Cardiac septum (tissue), 1 donor: ENCODE measurements at regions of chrX and their contacts with region 1.

Region 1: DNA sequence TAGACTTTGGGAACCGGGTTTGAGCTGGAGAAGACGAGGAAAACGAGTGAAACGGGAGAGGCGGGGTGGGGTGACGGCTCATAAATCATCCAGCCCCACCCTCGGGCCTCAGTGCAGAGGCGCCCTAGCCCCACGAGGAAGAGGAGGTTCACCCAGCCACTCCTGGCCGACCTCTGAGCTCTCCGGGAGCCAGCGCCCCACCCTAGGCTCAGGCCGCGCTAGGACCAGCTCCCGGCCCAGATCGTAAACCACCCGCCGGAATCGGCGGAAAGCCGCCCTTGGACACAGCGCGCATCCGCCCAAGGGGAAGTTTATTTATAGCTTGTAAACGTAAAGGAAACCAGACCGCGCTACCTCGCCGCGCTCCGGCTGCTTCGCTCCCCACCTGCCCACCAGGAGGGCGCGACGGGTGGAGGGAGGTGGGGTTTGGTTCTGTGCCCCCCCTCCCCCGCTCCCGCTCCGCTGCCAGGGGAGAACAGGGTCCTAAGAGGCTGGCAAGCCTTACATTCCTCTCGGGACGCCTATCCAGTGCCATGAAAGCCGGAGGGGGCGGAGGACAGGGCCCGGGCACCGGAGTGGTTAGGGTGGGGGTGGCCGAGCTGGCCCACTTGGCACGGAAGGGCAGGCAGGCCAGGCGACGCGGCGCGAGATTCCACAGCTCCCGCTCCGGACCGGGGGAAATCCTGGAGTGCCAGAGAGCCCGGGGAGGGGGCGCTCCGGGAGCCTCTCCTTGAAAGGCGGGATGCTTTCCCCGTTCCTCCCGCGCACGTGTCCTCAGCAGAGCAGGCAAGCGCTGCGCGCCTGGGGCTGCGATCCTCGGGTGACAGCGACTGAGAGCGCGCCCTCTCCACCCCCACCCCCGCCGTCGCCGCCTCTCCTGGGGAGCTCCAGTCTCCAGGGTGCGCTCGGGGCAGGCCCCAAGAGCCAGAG is 84.2 kb downstream of the BCOR start:
- DNase-seq: peak; percentile 86

Region 2: DNA sequence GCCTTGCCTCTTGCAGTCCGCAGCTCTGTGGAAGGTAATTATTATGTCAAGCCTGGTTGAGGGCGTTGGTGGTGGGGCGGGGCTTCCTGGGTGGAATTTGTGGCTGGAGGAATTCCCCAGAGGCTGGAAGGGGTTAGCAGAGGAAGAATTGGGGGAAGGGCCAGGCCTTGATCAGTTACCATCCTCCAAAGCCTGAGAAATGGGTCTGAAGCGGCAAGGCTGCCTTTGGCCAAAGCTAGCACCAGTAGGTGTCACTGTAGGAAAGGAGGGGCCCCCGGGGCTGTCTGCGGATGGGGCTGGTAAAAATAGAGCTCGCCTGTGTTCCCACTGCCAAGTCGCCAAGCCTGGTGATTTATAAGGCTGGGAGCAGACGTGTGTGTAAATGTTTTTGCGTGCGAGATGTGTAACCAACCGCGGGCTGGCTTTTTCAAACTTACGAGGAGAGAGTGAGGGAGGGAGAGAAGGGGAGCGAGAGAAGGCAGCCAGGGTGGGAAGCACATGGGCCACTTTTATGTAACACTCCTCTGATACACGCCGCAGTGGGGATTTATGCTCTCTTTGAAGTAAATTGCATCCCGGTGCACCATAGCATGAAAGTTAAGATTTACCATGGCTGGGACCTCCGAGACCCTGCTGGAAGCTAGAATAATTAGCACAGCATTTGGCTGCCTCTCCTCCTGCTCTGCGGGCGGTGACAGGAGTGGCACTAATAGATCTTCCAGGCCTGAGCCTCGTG is 282.7 kb before region 1 on chrX:
- intact Hi-C with region 1: loop called (anchors 5 kb)
- DNase-seq: peak; percentile 81

Region 3: DNA sequence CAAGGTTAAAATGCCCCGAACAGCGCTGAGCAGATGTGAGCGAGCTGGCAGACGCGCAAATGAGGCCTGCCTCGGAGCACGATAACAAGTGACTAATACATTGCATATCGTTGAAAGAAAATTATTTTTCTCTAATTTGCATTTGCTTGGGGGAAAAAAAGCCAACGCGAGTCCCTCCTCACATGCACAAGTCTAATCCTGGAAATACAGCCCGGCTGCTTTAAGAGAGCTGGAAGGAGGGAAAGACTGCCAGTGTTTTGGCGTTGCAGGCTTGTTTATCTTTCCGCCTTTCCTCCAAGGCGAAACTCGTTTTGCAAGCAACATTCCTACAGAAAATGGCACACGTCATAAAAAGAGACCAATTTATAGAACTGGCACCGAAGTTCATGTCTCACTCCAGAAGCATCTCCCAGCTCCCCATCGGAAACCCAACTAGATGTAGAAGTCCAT is 71.6 kb after region 1 on chrX:
- intact Hi-C with region 1: loop called (anchors 5 kb)
- DNase-seq: no peak

Region 4: GRCh38 chrX:40132751-40133150 is 119.2 kb after region 1 on chrX:
- intact Hi-C with region 1: no loop called
- DNase-seq: peak; percentile 85

Region 5: GRCh38 chrX:40153335-40154249 is 140.1 kb after region 1 on chrX:
- intact Hi-C with region 1: loop called (anchors 5 kb)
- DNase-seq: peak; percentile 80

Region 6: DNA sequence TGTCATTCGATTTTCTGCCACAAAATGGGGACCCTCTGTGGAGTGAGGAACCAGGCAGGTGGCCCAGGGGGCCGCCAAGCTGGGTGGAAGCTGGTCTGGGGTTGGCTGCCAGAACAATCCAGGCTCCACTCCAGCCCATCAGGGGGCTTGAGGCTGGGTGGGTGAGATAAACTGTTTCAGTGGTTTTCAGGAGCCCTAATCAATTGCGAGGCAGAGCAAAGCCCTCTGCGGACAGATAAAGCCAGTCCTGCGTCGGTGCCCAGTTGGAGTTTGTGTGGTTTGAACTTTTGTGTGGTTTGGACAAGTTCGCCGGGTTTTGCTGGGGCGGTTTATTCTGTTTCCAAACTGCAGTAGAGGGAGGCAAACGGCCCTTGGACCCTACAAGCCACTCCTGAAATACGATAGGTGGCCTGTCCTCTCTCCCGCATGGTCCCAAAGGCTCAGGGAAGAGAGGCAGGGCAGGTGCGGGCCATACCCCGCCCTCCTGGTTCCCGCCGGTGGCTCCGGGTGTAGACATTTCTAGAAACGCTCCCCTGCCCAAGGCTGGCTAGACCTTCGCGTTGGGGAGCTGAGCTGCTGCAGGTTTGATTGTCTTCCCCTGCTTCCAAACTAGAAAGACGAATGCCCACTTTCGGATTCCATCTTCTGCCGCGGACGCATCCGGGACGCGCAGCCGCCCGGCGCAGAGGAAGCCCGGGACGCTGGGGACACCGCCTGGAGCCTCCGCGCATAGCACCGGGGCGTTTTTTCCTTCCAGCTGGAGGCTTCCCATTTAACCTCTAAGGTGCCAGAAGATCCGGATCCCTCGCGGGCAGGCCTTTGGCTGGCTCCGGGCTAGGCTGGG is 253.2 kb after region 1 on chrX:
- intact Hi-C with region 1: loop called (anchors 5 kb)
- DNase-seq: peak; percentile 86